Left ventricle myocardium inferior (tissue), 1 donor: ENCODE measurements at regions of chr20 and their contacts with region 1.

Region 1: GRCh38 chr20:47610247-47610944 is 108.7 kb downstream of the NCOA3 start:
- DNase-seq: no peak
- H3K4me3 ChIP-seq: no peak overlapping the region
- H3K27ac ChIP-seq: peak overlapping the region; percentile 24
- H3K4me1 ChIP-seq: peaks cover 80% of the 10 kb centered on the region
- H3K27me3 ChIP-seq: no peaks in the 10 kb centered on the region
- CTCF ChIP-seq: no peak

Region 2: GRCh38 chr20:47501483-47502270 is 108.7 kb before region 1 on chr20 and contains the start of gene NCOA3:
- intact Hi-C with region 1: loop called (anchors 10 kb)
- DNase-seq: peak; percentile 97
- H3K4me3 ChIP-seq: peak within 1 kb of the TSS; percentile 99
- H3K27ac ChIP-seq: peak within 1 kb of the TSS; percentile 98
- H3K4me1 ChIP-seq: peaks cover 60% of the 10 kb centered on the region
- H3K27me3 ChIP-seq: no peaks in the 10 kb centered on the region
- CTCF ChIP-seq: peak; percentile 73
- total RNA-seq, gene NCOA3: 23.8 TPM

Region 3: DNA sequence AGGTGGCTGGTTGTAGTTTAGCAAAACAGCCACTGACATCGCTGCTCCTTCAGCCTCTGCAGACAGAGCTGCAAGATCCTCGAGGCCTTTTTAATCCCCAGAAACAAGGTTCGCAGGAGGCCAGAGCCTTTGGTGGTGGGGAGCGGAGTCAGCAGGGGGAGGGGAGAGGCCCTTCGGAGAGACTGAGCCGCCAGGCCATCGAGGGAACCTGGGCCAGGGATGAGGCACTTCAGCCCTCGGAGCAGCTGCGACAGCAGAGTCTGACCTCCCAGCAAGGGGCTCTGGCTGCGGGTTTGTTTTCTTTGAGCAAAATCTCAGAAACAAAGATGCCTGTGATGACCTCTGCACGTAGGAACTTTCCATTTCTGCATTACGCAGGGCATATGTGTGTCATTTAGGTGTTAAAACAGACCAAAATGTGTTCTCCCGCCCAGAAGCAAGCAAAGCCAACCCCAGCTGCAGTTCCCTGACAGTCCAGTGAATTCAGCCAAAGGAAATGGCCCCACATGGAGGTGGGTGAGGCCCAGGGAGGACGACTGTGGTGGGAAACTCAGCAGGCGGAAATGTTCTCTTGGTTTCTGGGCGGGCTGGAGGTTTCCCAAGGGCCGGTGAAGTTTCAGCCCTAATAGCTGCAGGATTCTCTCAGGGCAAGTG is 346.1 kb after region 1 on chr20:
- intact Hi-C with region 1: no loop called
- DNase-seq: peak; percentile 36
- H3K4me3 ChIP-seq: no peak overlapping the region
- H3K27ac ChIP-seq: peak overlapping the region; percentile 33
- H3K4me1 ChIP-seq: peaks cover 23% of the 10 kb centered on the region
- H3K27me3 ChIP-seq: peaks cover 48% of the 10 kb centered on the region
- CTCF ChIP-seq: peak; percentile 15